ENCODE measurements at regions of chr6 and their contacts with region 1.

Region 1: GRCh38 chr6:152552616-152553209 is 84.4 kb downstream of the SYNE1 start:
- DNase-seq: peak; percentile 67
- ATAC-seq: peak; percentile 91 to 95
- H3K4me3 ChIP-seq: no peak overlapping the region
- H3K27ac ChIP-seq: no peak overlapping the region
- H3K4me1 ChIP-seq: peaks cover 6% of the 10 kb centered on the region
- H3K27me3 ChIP-seq: no peaks in the 10 kb centered on the region
- CTCF ChIP-seq: peak; percentile 92

Region 2: DNA sequence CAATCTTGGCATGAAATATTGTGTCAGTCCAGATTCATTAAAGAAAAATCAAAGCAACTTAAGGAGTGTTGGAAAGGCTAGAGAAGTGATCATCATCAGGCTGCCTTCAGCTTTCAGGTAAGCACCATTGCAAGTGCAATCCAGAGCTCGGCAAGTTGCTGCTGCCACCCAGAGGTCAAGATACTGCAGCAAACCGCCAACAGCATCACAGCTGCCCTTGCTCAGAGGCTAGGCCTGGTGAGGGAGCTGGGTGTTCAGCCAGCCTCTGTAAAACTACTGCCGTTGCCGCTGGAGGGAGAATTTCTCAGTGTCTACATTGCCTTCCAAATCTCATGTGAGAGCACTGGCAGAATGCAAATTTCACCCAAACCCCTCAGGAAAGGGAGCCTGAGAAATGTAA is 90.3 kb after region 1 on chr6:
- intact Hi-C with region 1: loop called (anchors 5 kb)
- DNase-seq: peak; percentile 78
- ATAC-seq: peak; percentile 89 to 98
- H3K4me3 ChIP-seq: no peak overlapping the region
- H3K27ac ChIP-seq: no peak overlapping the region
- H3K4me1 ChIP-seq: peaks cover 6% of the 10 kb centered on the region
- H3K27me3 ChIP-seq: no peaks in the 10 kb centered on the region
- CTCF ChIP-seq: peak; percentile 78

Region 3: DNA sequence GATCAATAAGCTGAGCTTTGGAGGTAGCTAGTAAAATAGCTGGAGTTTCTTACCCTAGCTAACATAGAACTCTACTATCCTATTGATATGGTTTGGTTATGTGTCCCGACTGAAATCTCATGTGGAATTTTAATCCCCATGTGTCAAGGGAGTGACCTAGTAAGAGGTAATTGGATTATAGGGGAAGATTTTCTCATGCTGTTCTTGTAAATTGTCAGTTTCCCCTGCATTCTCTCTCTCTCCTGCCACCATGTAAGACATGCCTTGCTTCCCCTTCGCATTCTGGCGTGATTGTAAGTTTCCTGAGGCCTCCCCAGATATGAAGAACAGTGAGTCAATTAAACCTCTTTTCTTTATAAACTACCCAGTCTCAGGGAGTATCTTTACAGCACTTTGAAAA is 109.1 kb after region 1 on chr6:
- intact Hi-C with region 1: no loop called
- DNase-seq: no peak
- ATAC-seq: no peak
- H3K4me3 ChIP-seq: no peak overlapping the region
- H3K27ac ChIP-seq: no peak overlapping the region
- H3K4me1 ChIP-seq: no peaks in the 10 kb centered on the region
- H3K27me3 ChIP-seq: no peaks in the 10 kb centered on the region
- CTCF ChIP-seq: no peak

Measured in lower lobe of right lung (tissue), 2 donors.